Uterus (tissue), 4 donors: ENCODE measurements at regions of chrX and their contacts with region 1.

Region 1: GRCh38 chrX:8042304-8042703 is 115.1 kb upstream of the PNPLA4 start:
- DNase-seq: no peak
- H3K4me3 ChIP-seq: no peak overlapping the region
- H3K27ac ChIP-seq: no peak overlapping the region
- H3K4me1 ChIP-seq: no peaks in the 10 kb centered on the region
- H3K27me3 ChIP-seq: no peaks in the 10 kb centered on the region
- CTCF ChIP-seq: no peak
- POLR2A ChIP-seq: no peak

Region 2: DNA sequence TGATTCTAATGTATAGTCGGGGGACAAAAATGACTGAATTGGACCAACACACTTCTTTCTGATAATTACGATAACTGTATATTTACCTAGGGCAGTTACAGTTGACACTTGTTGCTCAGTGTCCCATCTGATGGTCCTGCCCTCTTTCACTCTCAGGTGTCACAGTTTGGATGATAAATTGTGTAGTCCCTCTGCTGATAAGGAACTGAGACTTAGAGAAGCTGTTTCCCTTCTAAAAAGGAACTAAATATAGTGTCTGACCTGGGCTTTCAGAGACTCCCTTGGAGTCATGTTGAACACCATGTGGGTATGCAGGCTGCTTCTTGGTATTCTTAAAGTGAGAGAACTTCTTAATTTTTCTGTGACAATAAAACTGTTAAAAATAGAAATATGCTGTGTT is 91.4 kb before region 1 on chrX:
- intact Hi-C with region 1: no loop called
- DNase-seq: no peak
- H3K4me3 ChIP-seq: no peak overlapping the region
- H3K27ac ChIP-seq: no peak overlapping the region
- H3K4me1 ChIP-seq: no peaks in the 10 kb centered on the region
- H3K27me3 ChIP-seq: no peaks in the 10 kb centered on the region
- CTCF ChIP-seq: no peak
- POLR2A ChIP-seq: no peak

Region 3: GRCh38 chrX:8103655-8104054 is 61.4 kb after region 1 on chrX:
- intact Hi-C with region 1: loop called (anchors 10 kb)
- DNase-seq: no peak
- H3K4me3 ChIP-seq: no peak overlapping the region
- H3K27ac ChIP-seq: no peak overlapping the region
- H3K4me1 ChIP-seq: no peaks in the 10 kb centered on the region
- H3K27me3 ChIP-seq: no peaks in the 10 kb centered on the region
- CTCF ChIP-seq: no peak
- POLR2A ChIP-seq: no peak

Region 4: DNA sequence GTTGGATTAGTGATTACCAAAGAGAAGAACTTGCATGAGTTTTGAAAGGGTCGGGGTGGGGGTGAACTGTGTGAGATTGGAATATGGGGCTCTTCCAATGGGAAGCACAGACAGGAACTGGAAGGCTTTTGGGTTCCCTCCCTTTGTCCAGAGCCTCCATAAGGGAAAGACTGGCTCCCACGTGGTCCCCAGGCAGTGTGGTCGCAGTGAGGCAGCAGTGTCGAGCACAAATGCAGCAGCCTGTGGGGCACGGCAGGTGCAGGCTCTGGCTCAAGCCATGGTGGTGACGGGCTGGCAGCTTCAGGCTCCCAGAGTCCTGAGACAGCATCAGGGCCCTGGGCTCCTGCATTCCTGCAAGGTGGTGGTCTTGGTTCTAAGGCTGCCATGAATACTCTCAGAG is 83.3 kb after region 1 on chrX:
- intact Hi-C with region 1: no loop called
- DNase-seq: no peak
- H3K4me3 ChIP-seq: no peak overlapping the region
- H3K27ac ChIP-seq: no peak overlapping the region
- H3K4me1 ChIP-seq: no peaks in the 10 kb centered on the region
- H3K27me3 ChIP-seq: no peaks in the 10 kb centered on the region
- CTCF ChIP-seq: no peak
- POLR2A ChIP-seq: no peak

Region 5: DNA sequence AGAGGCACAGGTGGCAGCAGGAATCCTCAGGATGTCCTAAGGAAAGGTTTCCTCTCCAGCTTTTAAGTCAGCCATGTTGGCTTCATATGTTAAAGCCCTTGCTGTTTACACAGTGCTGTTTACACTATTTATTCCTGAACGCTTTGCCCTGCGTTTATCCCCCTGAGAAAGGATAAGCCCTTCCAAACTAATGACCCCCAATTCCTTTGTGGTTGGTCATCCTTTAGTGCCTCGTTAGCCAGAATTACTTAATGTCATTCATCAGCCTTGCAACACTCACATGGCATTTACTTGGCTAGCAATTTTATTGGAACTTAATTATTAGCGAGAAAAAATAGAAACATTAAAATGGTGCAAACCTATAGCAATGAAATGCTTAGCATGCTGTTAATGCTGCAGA is 104.9 kb after region 1 on chrX:
- intact Hi-C with region 1: no loop called
- DNase-seq: no peak
- H3K4me3 ChIP-seq: no peak overlapping the region
- H3K27ac ChIP-seq: no peak overlapping the region
- H3K4me1 ChIP-seq: no peaks in the 10 kb centered on the region
- H3K27me3 ChIP-seq: no peaks in the 10 kb centered on the region
- CTCF ChIP-seq: no peak
- POLR2A ChIP-seq: no peak